Aorta (tissue), 5 donors: ENCODE measurements at regions of chr15 and their contacts with region 1.

Region 1: GRCh38 chr15:48324914-48325313 is 6.3 kb upstream of the DUT start:
- DNase-seq: no peak
- ATAC-seq: no peak
- H3K4me3 ChIP-seq: no peak overlapping the region
- H3K27ac ChIP-seq: no peak overlapping the region
- H3K4me1 ChIP-seq: no peaks in the 10 kb centered on the region
- H3K27me3 ChIP-seq: no peaks in the 10 kb centered on the region

Region 2: GRCh38 chr15:48266024-48266689 is 58.8 kb before region 1 on chr15:
- intact Hi-C with region 1: loop called in 1 of 2 experiments (anchors 10 kb)
- DNase-seq: no peak
- ATAC-seq: no peak
- H3K4me3 ChIP-seq: no peak overlapping the region
- H3K27ac ChIP-seq: no peak overlapping the region
- H3K4me1 ChIP-seq: no peaks in the 10 kb centered on the region
- H3K27me3 ChIP-seq: no peaks in the 10 kb centered on the region